Activated naive CD8-positive, alpha-beta T cell treated with anti-CD3 and anti-CD28 coated beads, Interleukin-2, amount 10 ng/mL, durations not matched to agents 7 days and 5 days (primary cell): ENCODE measurements at regions of chr6 and their contacts with region 1.

Region 1: GRCh38 chr6:73520688-73521350 is at the start of gene EEF1A1:
- DNase-seq: peak; percentile 92
- ATAC-seq: peak; percentile 77
- H3K4me3 Mint-ChIP-seq: peak within 1 kb of the TSS; percentile 94
- H3K27ac Mint-ChIP-seq: peak within 1 kb of the TSS; percentile 95
- H3K4me1 Mint-ChIP-seq: peaks cover 45% of the 10 kb centered on the region
- H3K27me3 Mint-ChIP-seq: no peaks in the 10 kb centered on the region
- total RNA-seq, gene EEF1A1: 8,804 to 9,235 TPM

Region 2: DNA sequence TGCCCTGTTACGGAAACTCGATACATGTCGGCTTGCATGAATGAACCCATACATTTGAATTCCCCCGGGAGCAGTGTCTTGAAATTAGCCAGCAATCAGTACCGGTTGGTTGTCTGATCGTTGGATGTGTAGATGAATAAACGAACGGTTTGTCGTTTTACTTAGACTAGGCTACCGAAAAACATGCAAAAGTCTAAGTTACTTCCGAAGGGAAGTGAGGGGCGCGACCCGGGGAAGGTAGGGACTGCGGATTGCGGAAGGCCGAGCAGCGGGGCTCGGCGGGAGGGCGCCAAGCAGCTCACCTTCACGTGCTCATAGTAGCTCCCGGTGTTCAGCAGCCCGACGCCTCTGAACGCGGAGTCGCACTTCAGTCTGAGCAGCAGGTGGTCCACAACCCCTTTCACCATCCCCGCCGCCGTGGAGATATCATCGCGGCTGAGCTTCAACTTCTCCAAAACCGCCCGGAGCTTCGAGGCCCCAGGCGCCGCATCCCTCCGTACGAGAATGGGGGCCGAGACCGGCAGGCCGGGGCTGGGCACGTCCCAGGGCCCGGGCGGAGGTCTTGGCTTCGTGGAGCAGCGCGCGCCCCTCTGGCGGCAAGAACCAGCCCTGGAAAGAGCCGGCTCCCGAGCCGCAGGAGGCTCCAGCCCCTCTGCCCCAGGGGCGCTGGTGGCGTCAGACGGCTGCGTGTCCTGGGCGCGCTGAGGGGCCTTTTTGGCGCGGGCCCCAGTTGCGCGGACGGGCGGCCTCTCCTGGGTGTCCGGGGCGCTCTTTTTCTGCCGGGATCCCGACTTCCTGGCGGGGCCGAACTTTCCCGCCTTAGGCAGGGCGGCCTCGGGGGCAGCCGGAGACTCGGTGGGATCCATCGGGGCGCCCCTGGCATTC is 69.4 kb before region 1 on chr6:
- POLR2A ChIA-PET with region 1: interaction called, 37 read pairs
- DNase-seq: peak; percentile 71
- ATAC-seq: peak; percentile 65
- H3K4me3 Mint-ChIP-seq: peak overlapping the region; percentile 97
- H3K27ac Mint-ChIP-seq: peak overlapping the region; percentile 90
- H3K4me1 Mint-ChIP-seq: peaks cover 34% of the 10 kb centered on the region
- H3K27me3 Mint-ChIP-seq: no peaks in the 10 kb centered on the region

Region 3: DNA sequence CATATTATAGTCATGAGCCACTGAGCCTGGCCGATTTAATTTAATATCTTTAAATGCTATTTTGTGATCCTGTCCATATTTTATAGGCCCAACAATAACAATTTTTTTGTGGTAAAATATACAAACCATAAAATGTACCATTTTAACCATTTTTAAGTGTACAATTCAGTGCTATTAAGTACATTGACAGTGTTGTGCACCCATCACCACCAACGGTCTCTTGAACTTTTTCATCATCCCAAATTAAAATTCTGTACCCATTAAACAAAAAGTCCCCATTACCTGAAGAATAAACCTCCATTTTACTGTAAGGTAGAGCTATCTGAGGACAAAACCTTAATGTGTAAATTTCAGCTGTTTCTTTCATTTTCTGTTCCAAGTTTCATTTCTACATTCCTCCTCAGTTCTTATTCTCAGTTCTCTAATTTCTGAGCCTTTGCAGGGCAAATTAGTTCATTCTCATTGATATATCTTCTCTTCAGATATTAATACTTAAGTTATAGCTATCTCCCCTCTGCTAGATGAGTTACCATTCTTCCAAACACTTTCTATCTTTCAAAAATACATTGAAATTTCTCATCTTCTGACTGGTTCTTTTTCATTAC is 49.0 kb before region 1 on chr6:
- POLR2A ChIA-PET with region 1: interaction called, 12 read pairs
- DNase-seq: no peak
- ATAC-seq: peak; percentile 51
- H3K4me3 Mint-ChIP-seq: peak overlapping the region; percentile 64
- H3K27ac Mint-ChIP-seq: peak overlapping the region; percentile 79
- H3K4me1 Mint-ChIP-seq: peaks cover 19% of the 10 kb centered on the region
- H3K27me3 Mint-ChIP-seq: no peaks in the 10 kb centered on the region

Region 4: GRCh38 chr6:73509851-73510250 is 11.0 kb before region 1 on chr6:
- POLR2A ChIA-PET with region 1: no interaction called
- DNase-seq: no peak
- ATAC-seq: no peak
- H3K4me3 Mint-ChIP-seq: no peak overlapping the region
- H3K27ac Mint-ChIP-seq: no peak overlapping the region
- H3K4me1 Mint-ChIP-seq: peaks cover 5% of the 10 kb centered on the region
- H3K27me3 Mint-ChIP-seq: no peaks in the 10 kb centered on the region

Region 5: DNA sequence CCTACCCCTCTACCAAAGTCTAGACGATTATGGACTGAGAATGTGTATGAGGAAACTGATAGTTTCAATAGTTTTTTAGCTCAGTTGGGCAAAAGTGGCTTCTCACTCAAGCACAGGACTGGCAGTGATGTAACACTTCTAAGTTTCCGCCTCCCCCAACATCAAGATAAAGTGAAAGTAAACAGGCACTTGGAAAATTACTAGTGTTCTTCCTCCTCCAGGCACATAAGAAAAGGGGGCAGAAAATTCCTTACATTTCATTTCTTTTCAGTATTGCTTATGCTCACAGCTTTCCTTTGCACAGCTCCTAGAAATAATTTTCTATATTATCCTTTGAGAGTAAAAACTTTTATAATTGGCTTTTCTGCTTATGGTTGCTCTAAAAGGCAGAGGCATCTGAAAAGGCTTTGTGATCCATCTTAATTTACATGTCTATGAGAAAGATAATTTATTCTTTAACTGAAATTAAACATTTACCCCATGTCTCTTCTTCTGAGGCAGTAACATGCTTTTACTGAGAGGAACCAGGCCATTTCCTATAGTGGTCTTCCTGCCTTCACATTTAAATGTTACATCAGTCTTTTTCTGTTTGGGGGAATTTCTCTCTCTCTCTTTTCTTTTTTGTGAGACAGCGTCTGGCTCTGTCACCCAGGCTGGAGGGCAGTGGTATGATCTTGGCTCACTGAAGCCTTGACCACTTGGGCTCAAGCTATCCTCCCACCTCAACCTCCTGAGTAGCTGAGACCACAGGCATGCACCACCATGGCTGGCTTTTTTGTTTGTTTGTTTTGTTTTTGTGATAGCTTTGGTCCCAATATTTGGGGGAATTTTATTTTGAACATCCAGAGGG is 65.0 kb after region 1 on chr6:
- POLR2A ChIA-PET with region 1: interaction called, 145 read pairs
- DNase-seq: peak; percentile 40
- ATAC-seq: peak; percentile 85
- H3K4me3 Mint-ChIP-seq: peak overlapping the region; percentile 90
- H3K27ac Mint-ChIP-seq: peak overlapping the region; percentile 99
- H3K4me1 Mint-ChIP-seq: peaks cover 27% of the 10 kb centered on the region
- H3K27me3 Mint-ChIP-seq: no peaks in the 10 kb centered on the region

Region 6: GRCh38 chr6:73653571-73654424 is 133.0 kb after region 1 on chr6 and contains the start of gene SLC17A5:
- POLR2A ChIA-PET with region 1: interaction called, 72 read pairs
- DNase-seq: peak; percentile 90
- ATAC-seq: peak; percentile 88
- H3K4me3 Mint-ChIP-seq: peak within 1 kb of the TSS; percentile 97
- H3K27ac Mint-ChIP-seq: peak within 1 kb of the TSS; percentile 97
- H3K4me1 Mint-ChIP-seq: peaks cover 21% of the 10 kb centered on the region
- H3K27me3 Mint-ChIP-seq: no peaks in the 10 kb centered on the region
- total RNA-seq, gene SLC17A5: 9.2 to 9.3 TPM